Endothelial cell of umbilical vein (primary cell): ENCODE measurements at regions of chr3 and their contacts with region 1.

Region 1: DNA sequence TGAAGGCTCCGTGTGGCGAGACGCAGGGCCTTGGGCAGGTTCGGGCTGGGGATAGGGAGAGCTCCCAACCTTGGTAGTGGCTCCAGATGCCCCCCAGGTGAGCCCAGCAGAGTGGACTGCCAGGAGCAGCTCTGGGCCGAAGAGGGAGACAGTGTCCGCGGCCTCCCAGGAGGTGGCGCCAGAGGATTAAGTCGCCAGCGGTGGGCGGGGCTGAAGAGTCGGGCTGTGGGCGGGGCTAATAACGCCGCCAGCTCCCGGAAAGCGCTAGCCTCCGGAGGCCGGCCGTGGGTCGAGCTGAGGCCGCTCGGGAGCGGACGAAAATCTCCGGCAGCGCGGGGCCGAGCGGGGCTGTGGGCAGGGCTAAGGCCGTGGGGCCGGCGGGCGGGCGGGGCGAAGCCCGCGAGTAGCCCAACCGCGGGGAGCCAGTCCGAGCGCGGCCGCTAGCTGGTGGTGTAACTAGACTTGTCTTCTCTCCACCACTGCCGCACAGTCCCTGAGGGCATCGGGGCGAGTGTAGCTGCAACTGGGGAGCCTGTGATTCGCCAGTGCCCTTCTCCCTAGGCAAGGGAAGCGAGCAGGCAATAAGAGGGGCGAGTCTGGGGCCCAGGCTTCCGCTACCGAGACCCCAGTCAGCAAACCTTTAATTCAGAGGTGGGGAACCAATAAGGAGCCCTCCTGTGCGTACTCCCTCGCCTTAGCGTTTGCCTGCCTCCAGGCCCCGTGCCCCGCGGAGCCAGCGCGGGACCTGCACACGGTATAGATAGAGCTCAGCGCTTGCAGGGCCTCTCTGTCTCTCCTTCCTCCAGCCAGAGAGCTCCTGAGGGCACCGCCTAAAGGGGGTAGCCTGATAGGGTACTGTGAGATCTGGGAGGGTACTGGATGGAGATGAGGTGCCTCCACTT is 14.4 kb upstream of the BSN start:
- DNase-seq: peak; percentile 96
- H3K4me3 ChIP-seq: peak overlapping the region; percentile 3 to 33 (median 6)
- H3K27ac ChIP-seq: no peak overlapping the region
- H3K4me1 ChIP-seq: peaks cover 7% of the 10 kb centered on the region
- H3K27me3 ChIP-seq: peaks cover 2 to 5% of the 10 kb centered on the region in 2 experiments
- CTCF ChIP-seq: peak; percentile 81 to 92
- POLR2A ChIP-seq: peak; percentile 42

Region 2: DNA sequence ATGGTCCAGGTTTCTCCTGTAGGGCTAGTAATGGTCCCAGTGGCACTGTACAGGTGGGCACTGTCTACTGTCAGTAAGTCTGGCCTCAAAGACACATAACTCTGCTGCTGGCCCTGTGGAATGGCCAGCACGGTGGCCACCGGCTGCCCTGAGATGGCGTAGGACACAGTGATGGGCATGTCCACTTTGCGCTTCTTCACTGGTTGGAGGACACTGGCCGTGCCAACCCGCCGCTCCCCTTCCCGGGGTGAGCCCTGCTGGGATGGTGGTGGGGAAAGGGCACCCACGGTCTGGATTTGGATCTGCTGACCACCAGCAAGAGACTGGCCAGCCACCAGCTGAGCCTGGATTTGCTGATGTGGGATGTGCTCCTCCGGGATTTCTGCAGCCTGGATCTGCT is 482.6 kb before region 1 on chr3:
- CTCF ChIA-PET with region 1: no interaction called
- POLR2A ChIA-PET with region 1: no interaction called
- dilution Hi-C with region 1: no loop called
- intact Hi-C with region 1: no loop called
- DNase-seq: no peak
- H3K4me3 ChIP-seq: no peak overlapping the region
- H3K27ac ChIP-seq: no peak overlapping the region
- H3K4me1 ChIP-seq: no peaks in the 10 kb centered on the region
- H3K27me3 ChIP-seq: no peaks in the 10 kb centered on the region
- CTCF ChIP-seq: no peak
- POLR2A ChIP-seq: no peak

Region 3: DNA sequence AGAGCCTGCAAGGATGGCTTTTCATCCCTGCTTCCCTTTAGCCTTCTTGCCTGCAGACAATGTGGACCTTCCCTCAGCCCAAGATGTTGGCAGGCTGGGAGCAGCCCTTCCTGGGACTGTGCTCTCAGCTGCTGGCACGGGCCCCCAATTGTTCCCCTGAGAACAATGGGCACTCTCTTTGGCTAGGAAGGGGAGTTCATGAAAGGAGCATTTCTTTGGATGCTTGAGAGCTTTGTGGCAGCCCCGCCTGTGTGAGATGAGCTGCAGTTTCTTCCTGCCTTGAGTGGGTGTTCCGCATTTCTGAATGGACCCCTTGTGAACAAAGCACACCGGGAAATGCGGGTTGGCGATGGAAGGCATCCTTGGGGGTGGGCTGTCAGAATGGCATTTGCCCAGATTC is 20.6 kb before region 1 on chr3:
- CTCF ChIA-PET with region 1: interaction called, 11 read pairs
- POLR2A ChIA-PET with region 1: no interaction called
- dilution Hi-C with region 1: no loop called
- intact Hi-C with region 1: no loop called
- DNase-seq: no peak
- H3K4me3 ChIP-seq: no peak overlapping the region
- H3K27ac ChIP-seq: no peak overlapping the region
- H3K4me1 ChIP-seq: no peaks in the 10 kb centered on the region
- H3K27me3 ChIP-seq: no peaks in the 10 kb centered on the region
- CTCF ChIP-seq: no peak
- POLR2A ChIP-seq: no peak

Region 4: DNA sequence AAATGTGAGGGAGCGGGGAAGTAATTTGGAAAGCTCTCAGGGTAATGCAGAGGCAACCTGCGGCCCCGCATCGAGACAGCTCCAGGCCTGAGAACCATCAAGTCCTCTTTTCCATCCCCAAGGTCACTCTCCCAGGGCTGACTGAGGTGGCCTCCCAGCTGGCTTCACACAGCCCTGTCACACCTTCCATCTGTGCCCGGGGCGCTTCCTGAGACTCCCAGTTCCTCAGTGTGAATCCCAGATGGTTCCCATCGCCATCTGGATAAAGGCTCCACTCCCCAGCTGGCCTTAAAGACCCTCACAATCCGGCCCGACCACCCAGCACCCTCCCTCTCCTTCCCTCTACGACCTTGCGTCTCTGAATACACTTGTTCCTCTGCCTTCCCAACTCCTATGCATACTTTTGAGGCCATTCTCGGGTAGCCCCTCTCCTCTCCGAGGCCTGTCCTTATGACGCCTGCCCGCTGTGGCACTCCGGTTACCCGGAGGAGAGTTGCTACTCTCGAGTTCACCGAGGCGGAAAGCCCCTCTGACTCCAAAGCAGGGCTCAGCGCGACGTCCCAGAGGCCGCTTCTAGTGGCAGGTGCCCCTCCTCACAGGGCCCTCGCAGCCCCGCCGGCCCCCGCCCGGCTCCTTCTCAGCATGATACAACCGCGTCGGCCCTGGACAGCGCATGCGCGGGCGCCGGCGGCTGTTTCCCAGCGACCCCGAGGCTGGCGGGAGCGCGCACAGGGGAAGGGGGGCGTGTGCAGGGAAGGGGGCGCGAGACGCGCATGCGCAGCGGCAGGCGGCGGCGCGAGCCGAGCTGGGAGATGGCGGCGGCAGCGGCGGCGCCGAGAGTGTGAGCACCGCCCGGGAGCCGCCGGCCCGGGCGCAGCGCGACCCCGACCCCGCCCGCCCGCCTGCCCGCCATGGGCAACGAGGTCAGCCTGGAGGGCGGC is 14.1 kb after region 1 on chr3 and contains the start of gene BSN:
- CTCF ChIA-PET with region 1: interaction called, 36 read pairs
- POLR2A ChIA-PET with region 1: interaction called, 3 read pairs
- dilution Hi-C with region 1: no loop called
- intact Hi-C with region 1: loop called (anchors 1 kb)
- DNase-seq: peak; percentile 92
- H3K4me3 ChIP-seq: peak within 1 kb of the TSS; percentile 39 to 65 (median 51)
- H3K27ac ChIP-seq: no peak within 1 kb of the TSS
- H3K4me1 ChIP-seq: peaks cover 6% of the 10 kb centered on the region
- H3K27me3 ChIP-seq: peaks cover 14 to 18% of the 10 kb centered on the region in 2 experiments
- CTCF ChIP-seq: no peak
- POLR2A ChIP-seq: no peak
- total RNA-seq, gene BSN: 0.27 and 0.28 TPM in 2 replicates

Region 5: GRCh38 chr3:49656541-49657112 is 116.7 kb after region 1 on chr3:
- CTCF ChIA-PET with region 1: interaction called, 11 read pairs
- POLR2A ChIA-PET with region 1: no interaction called
- dilution Hi-C with region 1: no loop called
- intact Hi-C with region 1: no loop called
- DNase-seq: no peak
- H3K4me3 ChIP-seq: no peak overlapping the region
- H3K27ac ChIP-seq: no peak overlapping the region
- H3K4me1 ChIP-seq: no peaks in the 10 kb centered on the region
- H3K27me3 ChIP-seq: no peaks in the 10 kb centered on the region
- CTCF ChIP-seq: no peak
- POLR2A ChIP-seq: no peak

Region 6: DNA sequence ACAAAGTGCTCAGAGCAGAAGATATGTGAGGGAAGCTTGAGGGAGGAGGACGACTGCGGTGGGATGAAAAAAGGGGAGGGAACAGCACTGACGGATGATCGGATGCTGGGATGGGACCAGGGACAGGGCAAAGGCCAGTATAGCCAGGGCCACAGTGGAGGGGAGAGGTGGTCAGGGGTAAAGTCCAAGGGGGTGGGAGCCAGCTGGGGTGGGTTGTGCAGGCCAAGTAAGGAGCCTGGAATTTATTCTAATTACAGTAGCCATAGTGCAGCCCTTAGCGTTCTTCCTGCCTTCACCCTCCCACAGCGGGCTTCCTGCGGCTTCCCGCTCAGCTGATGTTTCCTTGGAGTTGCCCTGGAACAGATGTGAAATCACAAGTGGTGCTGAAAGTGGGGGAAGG is 126.7 kb after region 1 on chr3:
- CTCF ChIA-PET with region 1: interaction called, 293 read pairs
- POLR2A ChIA-PET with region 1: interaction called, 9 read pairs
- dilution Hi-C with region 1: no loop called
- intact Hi-C with region 1: loop called (anchors 1 kb)
- DNase-seq: no peak
- H3K4me3 ChIP-seq: no peak overlapping the region
- H3K27ac ChIP-seq: no peak overlapping the region
- H3K4me1 ChIP-seq: no peaks in the 10 kb centered on the region
- H3K27me3 ChIP-seq: peaks cover 0 to 2% of the 10 kb centered on the region in 2 experiments
- CTCF ChIP-seq: no peak
- POLR2A ChIP-seq: no peak

Region 7: GRCh38 chr3:49673715-49674496 is 134.0 kb after region 1 on chr3 and contains the start of gene APEH:
- CTCF ChIA-PET with region 1: interaction called, 293 read pairs
- POLR2A ChIA-PET with region 1: interaction called, 9 read pairs
- dilution Hi-C with region 1: no loop called
- intact Hi-C with region 1: loop called (anchors 1 kb)
- DNase-seq: peak; percentile 95
- H3K4me3 ChIP-seq: peak within 1 kb of the TSS; percentile 41 to 47 (median 44)
- H3K27ac ChIP-seq: peak within 1 kb of the TSS; percentile 40
- H3K4me1 ChIP-seq: peaks cover 4% of the 10 kb centered on the region
- H3K27me3 ChIP-seq: no peaks in the 10 kb centered on the region
- CTCF ChIP-seq: no peak
- POLR2A ChIP-seq: peak; percentile 84
- total RNA-seq, gene APEH: 68.2 and 77.9 TPM in 2 replicates

Region 8: GRCh38 chr3:49703443-49703927 is 163.6 kb after region 1 on chr3:
- CTCF ChIA-PET with region 1: interaction called, 17 read pairs
- POLR2A ChIA-PET with region 1: no interaction called
- dilution Hi-C with region 1: no loop called
- intact Hi-C with region 1: no loop called
- DNase-seq: peak; percentile 59
- H3K4me3 ChIP-seq: no peak overlapping the region
- H3K27ac ChIP-seq: no peak overlapping the region
- H3K4me1 ChIP-seq: peaks cover 5% of the 10 kb centered on the region
- H3K27me3 ChIP-seq: no peaks in the 10 kb centered on the region
- CTCF ChIP-seq: peak; percentile 75 to 96
- POLR2A ChIP-seq: no peak

Region 9: DNA sequence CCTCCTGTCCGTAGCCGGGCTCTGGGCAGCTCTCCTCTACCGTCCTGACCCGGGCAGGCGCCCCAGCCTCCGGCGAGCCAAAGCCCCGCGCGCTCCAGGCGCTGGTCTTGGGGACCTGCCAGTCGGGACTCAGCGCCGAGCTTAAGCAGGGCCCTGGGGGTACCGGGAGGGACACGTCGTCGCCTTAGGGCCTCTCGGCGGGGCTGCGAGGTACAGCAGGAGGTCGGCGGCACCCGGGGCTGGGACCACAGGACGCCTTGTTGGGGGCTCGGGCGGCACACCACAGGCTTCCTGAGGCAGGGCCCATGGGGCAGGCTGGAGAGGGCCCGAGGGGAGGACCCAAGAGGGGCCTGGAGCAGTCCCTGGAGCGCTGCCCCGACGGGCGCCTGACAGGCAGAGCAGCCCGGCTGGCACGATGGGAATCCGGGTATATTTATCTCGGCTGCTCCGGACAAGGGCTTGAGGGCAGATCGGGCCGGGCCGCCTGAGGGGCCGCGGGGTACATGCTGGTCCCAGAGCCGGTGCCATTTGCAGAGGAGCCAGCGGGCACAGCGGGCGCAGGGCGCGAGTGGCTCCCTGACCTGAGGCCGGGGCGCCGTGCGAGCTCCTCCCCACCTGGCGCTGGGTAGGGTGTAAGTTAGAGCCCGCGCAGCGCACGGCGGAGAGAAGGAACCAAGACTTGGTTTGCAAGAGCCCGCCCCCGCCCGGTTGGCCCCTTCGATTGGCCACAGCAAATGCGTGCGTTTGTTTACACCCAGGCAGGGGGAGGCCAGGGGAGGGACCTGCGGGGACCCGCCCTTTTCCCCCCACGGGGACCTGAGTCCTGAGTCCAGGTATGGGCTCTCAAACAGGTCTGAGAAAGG is 665.7 kb after region 1 on chr3:
- CTCF ChIA-PET with region 1: no interaction called
- POLR2A ChIA-PET with region 1: no interaction called
- dilution Hi-C with region 1: no loop called
- intact Hi-C with region 1: no loop called
- DNase-seq: peak; percentile 31
- H3K4me3 ChIP-seq: peak overlapping the region in 2 of 3 experiments; percentile 27 to 36
- H3K27ac ChIP-seq: no peak overlapping the region
- H3K4me1 ChIP-seq: peaks cover 3% of the 10 kb centered on the region
- H3K27me3 ChIP-seq: peaks cover 18% of the 10 kb centered on the region in 2 experiments
- CTCF ChIP-seq: no peak
- POLR2A ChIP-seq: no peak